ENCODE measurements at regions of chr11 and their contacts with region 1.

Region 1: GRCh38 chr11:118287006-118287405 is 17.5 kb upstream of the CD3E start:
- DNase-seq: no peak
- ATAC-seq: no peak
- H3K4me3 ChIP-seq: no peak overlapping the region
- H3K27ac ChIP-seq: no peak overlapping the region
- H3K4me1 ChIP-seq: no peaks in the 10 kb centered on the region
- H3K27me3 ChIP-seq: no peaks in the 10 kb centered on the region
- CTCF ChIP-seq: no peak
- POLR2A ChIP-seq: no peak

Region 2: GRCh38 chr11:118145285-118146227 is 141.4 kb before region 1 on chr11:
- intact Hi-C with region 1: loop called (anchors 5 kb)
- DNase-seq: peak; percentile 89 to 94 (median 93)
- ATAC-seq: peak; percentile 97
- H3K4me3 ChIP-seq: peak overlapping the region; percentile 52 to 71
- H3K27ac ChIP-seq: peak overlapping the region in 2 of 4 donors; percentile 38 to 41
- H3K4me1 ChIP-seq: peaks cover 6% of the 10 kb centered on the region
- H3K27me3 ChIP-seq: peaks cover 0 to 3% of the 10 kb centered on the region in 2 donors
- CTCF ChIP-seq: peak; percentile 86 to 98 (median 91)
- POLR2A ChIP-seq: peak in 1 of 3 donors; percentile 15

Region 3: DNA sequence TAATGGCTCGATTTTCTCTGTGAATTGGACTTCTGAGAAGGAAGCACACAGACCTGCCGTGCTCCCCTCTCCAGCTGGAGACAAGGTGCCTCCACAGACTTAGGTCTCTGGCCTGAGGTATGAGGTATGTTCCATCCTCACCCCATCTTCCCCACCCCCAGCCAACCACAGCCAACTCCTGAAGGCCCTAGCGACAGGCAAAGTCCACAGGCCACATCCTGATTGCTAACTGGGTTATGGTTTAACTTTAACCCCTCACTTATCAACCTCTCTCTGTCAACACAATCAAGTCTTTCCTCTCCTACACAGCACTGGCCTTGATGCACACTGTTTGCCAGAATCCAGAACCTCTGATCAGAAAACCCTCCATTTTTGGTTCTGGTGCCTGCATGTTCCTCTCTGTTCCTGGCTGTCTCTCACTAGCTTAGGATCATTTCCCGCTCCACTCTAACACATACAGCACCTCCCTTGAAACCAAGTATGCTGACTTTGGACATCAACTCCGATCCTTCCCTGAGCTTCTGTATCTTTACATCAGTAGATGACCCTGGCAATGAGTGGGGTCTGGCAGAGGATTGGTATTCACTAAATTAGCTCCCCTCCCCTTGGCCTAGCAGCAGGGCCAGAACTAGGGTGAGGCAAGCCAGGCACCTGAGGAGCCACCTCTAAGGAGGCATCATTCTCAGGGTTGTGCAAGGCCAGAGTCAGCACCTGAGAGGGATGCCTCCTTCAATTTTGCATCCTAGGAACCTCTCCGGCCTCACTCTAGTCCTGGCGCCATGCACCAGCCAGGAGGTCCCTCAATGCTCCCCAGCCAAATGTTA is 84.2 kb before region 1 on chr11:
- intact Hi-C with region 1: loop called (anchors 5 kb)
- DNase-seq: peak in 3 of 4 donors; percentile 21 to 32 (median 30)
- ATAC-seq: peak; percentile 38
- H3K4me3 ChIP-seq: no peak overlapping the region
- H3K27ac ChIP-seq: peak overlapping the region in 2 of 4 donors; percentile 11 to 12
- H3K4me1 ChIP-seq: peaks cover 23% of the 10 kb centered on the region
- H3K27me3 ChIP-seq: no peaks in the 10 kb centered on the region
- CTCF ChIP-seq: no peak
- POLR2A ChIP-seq: no peak